ENCODE measurements at regions of chr4 and their contacts with region 1.

Region 1: DNA sequence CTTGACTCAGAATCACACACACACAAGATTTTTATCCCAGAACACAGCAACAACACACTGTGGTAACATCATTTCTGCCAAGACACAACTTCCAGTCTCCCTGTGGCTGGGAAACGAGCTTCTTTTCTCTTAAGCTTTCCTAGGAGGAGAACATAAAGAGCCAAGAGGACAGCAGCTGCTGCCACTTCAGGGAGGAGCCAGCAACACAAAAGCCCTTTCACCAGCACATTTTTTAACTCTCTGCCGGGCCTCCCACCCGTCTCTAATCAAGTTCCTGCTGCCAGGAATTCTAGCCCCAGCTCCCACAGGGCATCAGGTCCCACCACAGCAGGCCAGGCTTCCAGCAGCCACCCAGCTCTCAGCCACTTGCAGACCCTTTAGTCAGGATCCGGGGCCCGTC is 22.4 kb downstream of the FAT1 start:
- DNase-seq: no peak
- ATAC-seq: peak; percentile 23
- H3K4me3 ChIP-seq: peak overlapping the region in 1 of 2 experiments; percentile 25; a peak in 2 of 4 replicates
- H3K27ac ChIP-seq: peak overlapping the region; percentile 98
- H3K4me1 ChIP-seq: peaks cover 91% of the 10 kb centered on the region
- H3K27me3 ChIP-seq: no peaks in the 10 kb centered on the region
- CTCF ChIP-seq: no peak

Region 2: DNA sequence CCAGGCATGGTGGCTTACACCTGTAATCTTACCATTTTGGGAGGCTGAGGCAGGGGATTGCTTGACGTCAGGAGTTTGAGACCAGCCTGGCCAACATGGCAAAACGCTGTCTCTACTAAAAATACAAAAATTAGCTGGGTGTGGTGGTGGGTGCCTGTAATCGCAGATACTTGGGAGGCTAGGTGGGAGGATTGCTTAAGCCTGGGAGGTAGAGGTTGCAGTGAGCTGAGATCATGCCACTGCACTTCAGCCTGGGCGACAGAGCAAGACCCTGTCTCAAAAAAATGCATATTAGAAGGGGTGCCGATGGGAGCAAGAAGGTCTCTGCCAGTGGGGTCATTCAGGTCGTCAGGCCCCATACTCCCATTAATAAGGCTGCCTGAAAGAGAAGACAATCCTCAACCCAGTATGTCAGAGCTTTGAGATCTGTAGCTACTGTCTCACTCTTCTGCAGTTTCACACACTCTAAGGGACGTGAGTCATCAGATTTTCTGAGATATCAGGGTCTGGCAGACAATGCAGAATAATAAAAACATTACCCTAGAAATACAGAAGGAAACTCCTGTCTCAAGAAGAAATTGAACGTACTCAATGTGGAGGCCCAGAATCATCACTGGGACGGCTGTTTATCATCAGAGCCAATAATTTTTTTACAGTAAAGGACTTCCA is 199.1 kb after region 1 on chr4:
- CTCF ChIA-PET with region 1: no interaction called
- POLR2A ChIA-PET with region 1: interaction called, 13 read pairs
- in situ Hi-C with region 1: no loop called
- intact Hi-C with region 1: no loop called
- DNase-seq: no peak
- ATAC-seq: peak; percentile 74; the same call in 1 of the 2 replicates
- H3K4me3 ChIP-seq: no peak overlapping the region
- H3K27ac ChIP-seq: no peak overlapping the region
- H3K4me1 ChIP-seq: peaks cover 8% of the 10 kb centered on the region
- H3K27me3 ChIP-seq: no peaks in the 10 kb centered on the region
- CTCF ChIP-seq: no peak